ENCODE measurements at regions of chr9 and their contacts with region 1.

Region 1: GRCh38 chr9:120755827-120756434 is 37.3 kb downstream of the FBXW2 start:
- DNase-seq: peak; percentile 30
- ATAC-seq: peak; percentile 94
- H3K4me3 ChIP-seq: no peak overlapping the region
- H3K27ac ChIP-seq: no peak overlapping the region
- H3K4me1 ChIP-seq: peaks cover 9% of the 10 kb centered on the region
- H3K27me3 ChIP-seq: no peaks in the 10 kb centered on the region
- CTCF ChIP-seq: peak; percentile 65 to 88 (median 84); a peak in 5 of 6 replicates
- EP300 ChIP-seq: no peak
- POLR2A ChIP-seq: no peak
- RAD21 ChIP-seq: peak; percentile 96

Region 2: DNA sequence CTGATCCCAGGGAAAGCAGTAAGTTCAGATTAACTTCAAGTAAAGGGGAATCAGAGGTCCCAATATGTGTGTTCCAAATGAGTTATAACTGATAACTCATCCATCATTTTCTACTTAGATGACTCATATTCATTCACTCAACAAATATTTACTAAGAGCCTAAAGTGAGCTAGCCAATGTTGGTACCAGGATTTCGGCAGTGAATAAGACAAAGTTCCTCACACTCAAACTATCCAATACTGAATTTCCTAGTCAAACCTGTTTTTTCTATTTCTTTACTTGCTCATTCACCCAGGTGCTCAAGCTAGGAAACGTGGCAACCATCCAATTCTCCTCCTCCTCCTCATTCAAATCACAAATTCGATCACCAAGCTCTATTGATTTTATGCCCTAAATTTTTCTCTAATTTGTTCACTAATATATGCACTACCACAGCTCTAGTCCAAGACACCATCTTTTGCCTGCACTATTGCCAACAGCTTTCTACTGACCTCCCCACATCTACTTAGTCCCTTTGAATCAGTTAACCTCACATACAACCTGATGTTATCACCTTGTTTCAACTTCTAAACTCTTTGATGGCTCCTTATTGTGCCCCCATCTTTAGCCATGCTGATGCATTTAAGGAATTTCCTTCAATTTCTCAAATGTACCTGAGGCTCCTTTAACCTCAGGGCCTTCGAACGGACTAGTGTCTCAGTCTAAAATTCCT is 11.7 kb after region 1 on chr9:
- CTCF ChIA-PET with region 1: interaction called, 18 read pairs
- POLR2A ChIA-PET with region 1: no interaction called
- RAD21 ChIA-PET with region 1: interaction called, 4 read pairs
- SMC1A ChIA-PET with region 1: interaction called, 5 read pairs
- in situ Hi-C with region 1: no loop called
- intact Hi-C with region 1: no loop called
- DNase-seq: no peak
- ATAC-seq: no peak
- H3K4me3 ChIP-seq: no peak overlapping the region
- H3K27ac ChIP-seq: no peak overlapping the region
- H3K4me1 ChIP-seq: no peaks in the 10 kb centered on the region
- H3K27me3 ChIP-seq: no peaks in the 10 kb centered on the region
- CTCF ChIP-seq: no peak
- EP300 ChIP-seq: no peak
- POLR2A ChIP-seq: no peak
- RAD21 ChIP-seq: no peak

Region 3: DNA sequence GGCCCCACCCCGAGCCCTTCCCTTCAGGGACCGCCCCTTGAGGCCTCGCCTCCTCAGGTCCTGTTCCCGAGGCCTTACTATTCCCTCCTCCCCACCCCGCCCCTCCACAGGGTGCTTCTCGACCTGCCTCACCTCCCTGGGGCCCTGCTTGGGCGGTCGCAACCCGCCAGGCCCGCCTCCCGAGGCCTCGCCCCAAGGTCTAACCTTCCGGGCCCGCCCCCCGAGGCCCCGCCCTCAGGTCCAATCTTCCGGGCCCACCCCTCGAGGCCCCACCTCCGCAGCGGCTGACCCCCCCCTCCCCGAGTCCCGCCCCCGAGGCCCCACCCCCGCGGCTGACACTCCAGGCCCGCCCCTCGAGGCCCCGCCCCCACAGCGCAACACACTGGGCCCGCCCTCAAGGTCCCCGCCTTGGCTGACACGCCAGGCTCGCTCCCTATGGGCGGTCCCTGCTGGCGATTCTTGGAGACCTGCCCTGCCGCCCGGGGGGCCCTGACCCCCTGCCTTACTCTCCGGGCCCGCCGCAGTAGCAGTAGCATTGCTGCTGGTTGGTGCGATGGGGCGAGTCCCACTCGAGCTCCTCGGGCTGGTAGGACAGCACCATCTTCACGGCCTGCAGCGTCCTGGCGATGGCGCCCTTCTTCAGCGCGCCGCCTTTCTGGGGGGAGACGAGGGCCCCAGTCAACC is 112.9 kb after region 1 on chr9:
- CTCF ChIA-PET with region 1: interaction called, 18 read pairs
- POLR2A ChIA-PET with region 1: interaction called, 3 read pairs
- RAD21 ChIA-PET with region 1: interaction called, 7 read pairs
- SMC1A ChIA-PET with region 1: interaction called, 5 read pairs
- in situ Hi-C with region 1: no loop called
- intact Hi-C with region 1: no loop called
- DNase-seq: peak; percentile 77
- ATAC-seq: peak; percentile 96
- H3K4me3 ChIP-seq: peak overlapping the region; percentile 73
- H3K27ac ChIP-seq: peak overlapping the region; percentile 61
- H3K4me1 ChIP-seq: peaks cover 11% of the 10 kb centered on the region
- H3K27me3 ChIP-seq: no peaks in the 10 kb centered on the region
- CTCF ChIP-seq: peak; percentile 50 to 65 (median 64)
- EP300 ChIP-seq: no peak
- POLR2A ChIP-seq: peak; percentile 80
- RAD21 ChIP-seq: peak; percentile 43

Region 4: DNA sequence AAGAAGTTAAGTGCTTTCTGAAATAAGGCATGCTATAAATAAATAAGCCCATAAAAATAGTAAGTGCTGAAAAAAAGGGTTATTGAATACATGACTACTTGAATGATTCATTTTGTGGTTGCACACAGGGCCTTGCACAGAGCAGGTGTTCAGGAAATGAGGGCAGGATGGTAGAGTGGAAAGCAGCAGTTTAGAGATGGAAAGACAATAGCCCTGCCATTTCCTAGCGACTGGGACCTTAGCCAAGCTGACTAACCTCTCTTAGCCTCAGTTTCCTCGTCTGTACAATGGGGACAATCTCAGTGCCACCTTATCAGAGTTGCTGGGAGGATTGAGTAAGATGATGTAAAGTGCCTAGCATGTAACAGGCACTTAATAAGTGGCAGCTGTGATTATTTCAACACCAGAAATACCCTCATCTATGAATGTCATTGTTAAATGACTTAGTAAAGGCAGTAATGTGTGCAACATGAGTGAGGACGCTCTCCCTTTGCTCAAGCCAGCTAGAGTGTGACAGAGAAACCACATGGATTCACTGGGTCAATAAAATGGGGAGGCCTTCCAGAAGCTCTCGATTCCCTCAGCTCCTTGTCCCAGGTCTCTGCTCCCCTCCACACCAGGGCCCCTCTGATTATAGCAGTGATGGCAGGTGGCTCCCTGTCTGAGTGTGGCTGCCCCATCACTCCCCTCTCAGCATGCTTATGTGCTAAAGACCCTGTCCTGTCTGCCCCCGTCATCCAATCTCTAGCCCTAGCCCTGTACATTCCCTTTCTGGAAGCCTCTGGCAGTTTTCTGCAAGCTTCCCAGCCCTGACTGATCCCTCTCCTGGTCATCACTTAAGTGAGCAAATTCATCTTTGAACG is 137.0 kb after region 1 on chr9:
- CTCF ChIA-PET with region 1: interaction called, 5 read pairs
- POLR2A ChIA-PET with region 1: interaction called, 3 read pairs
- RAD21 ChIA-PET with region 1: interaction called, 11 read pairs
- SMC1A ChIA-PET with region 1: interaction called, 5 read pairs
- in situ Hi-C with region 1: no loop called
- intact Hi-C with region 1: loop called (anchors 1 kb)
- DNase-seq: no peak
- ATAC-seq: peak; percentile 80
- H3K4me3 ChIP-seq: no peak overlapping the region
- H3K27ac ChIP-seq: peak overlapping the region; percentile 94
- H3K4me1 ChIP-seq: peaks cover 62% of the 10 kb centered on the region
- H3K27me3 ChIP-seq: no peaks in the 10 kb centered on the region
- CTCF ChIP-seq: no peak
- EP300 ChIP-seq: peak; percentile 91 to 95
- POLR2A ChIP-seq: peak; percentile 62
- RAD21 ChIP-seq: no peak

Region 5: GRCh38 chr9:121067640-121068039 is 311.7 kb after region 1 on chr9:
- CTCF ChIA-PET with region 1: interaction called, 109 read pairs
- POLR2A ChIA-PET with region 1: no interaction called
- RAD21 ChIA-PET with region 1: interaction called, 13 read pairs
- SMC1A ChIA-PET with region 1: interaction called, 73 read pairs
- in situ Hi-C with region 1: loop called (anchors 5 kb)
- intact Hi-C with region 1: no loop called
- DNase-seq: no peak
- ATAC-seq: no peak
- H3K4me3 ChIP-seq: no peak overlapping the region
- H3K27ac ChIP-seq: no peak overlapping the region
- H3K4me1 ChIP-seq: peaks cover 11% of the 10 kb centered on the region
- H3K27me3 ChIP-seq: no peaks in the 10 kb centered on the region
- CTCF ChIP-seq: no peak
- EP300 ChIP-seq: no peak
- POLR2A ChIP-seq: no peak
- RAD21 ChIP-seq: no peak

Measured in GM12878 (cell line).